HAP-1 (cell line): ENCODE measurements at regions of chr7 and their contacts with region 1.

Region 1: GRCh38 chr7:134514663-134515062 is 12.7 kb upstream of the AKR1B10 start:
- DNase-seq: peak; percentile 53 to 63
- H3K4me3 ChIP-seq: no peak overlapping the region
- H3K4me1 ChIP-seq: no peaks in the 10 kb centered on the region
- H3K27me3 ChIP-seq: no peaks in the 10 kb centered on the region; the same call in 1 of the 2 replicates

Region 2: DNA sequence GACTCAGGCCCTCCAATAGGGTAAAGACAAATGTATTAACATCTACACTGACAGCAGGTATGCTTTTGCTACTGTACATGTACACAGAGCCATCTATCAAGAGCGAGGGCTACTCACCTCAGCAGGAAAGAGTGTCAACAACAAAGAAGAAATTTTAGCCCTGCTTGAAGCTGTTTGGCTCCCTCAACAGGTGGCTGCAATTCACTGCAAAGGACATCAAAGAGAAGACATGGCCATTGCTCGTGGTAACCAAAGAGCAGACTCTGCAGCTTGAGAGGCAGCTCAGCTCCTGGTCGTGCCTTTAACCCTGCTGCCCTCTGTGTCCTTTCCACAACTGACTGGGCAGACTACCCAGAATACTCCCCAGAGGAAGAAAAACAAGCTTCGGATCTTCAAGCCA is 39.3 kb after region 1 on chr7:
- in situ Hi-C with region 1: no loop called
- DNase-seq: no peak
- H3K4me3 ChIP-seq: no peak overlapping the region
- H3K4me1 ChIP-seq: no peaks in the 10 kb centered on the region
- H3K27me3 ChIP-seq: no peaks in the 10 kb centered on the region

Region 3: GRCh38 chr7:134613623-134614347 is 99.1 kb after region 1 on chr7:
- in situ Hi-C with region 1: loop called (anchors 10 kb)
- DNase-seq: no peak
- H3K4me3 ChIP-seq: no peak overlapping the region
- H3K4me1 ChIP-seq: no peaks in the 10 kb centered on the region
- H3K27me3 ChIP-seq: peaks cover 12% of the 10 kb centered on the region